HEK293 (cell line): ENCODE measurements at regions of chr1 and their contacts with region 1.

Region 1: DNA sequence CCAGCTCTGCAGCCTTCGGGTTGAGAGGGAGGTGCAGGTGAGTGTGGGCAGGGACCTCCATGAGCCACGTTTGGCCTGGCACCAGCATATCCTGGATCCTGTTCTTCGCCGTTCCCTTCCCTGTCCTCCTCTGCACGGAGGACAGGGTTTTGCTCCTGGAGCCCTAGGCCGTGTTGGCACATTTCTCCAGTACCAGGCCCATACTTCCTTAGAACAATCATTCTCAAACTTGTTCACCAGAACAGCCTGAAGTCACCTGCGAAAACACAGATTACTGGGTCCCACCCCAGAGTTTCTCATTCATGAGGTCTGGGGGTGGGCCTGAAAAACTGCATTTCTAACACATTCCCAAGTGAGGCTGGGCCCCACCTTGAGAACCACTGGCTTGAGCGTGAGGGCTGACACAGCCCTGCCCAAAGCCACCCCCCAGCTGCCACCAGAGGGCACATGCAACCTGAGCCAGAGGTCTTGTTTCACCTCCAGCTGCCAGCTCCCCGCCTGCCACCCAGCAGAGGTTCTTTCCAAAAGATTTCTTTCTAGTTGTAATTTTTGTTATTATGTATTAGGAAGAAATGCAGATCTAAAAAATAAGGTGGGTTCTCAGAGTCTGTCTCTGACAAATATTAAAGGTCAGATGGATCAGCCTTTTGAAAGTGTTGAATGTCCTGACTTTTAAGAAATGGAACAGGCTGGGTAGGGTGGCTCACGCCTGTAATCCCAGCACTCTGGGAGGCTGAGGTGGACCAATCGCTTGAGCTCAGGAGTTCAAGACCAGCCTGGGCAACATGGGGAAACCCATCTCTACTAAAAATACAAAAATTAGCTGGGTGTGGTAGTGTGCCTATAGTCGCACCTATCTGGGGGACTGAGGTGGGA is 39.6 kb upstream of the LDLRAP1 start:
- H3K4me3 ChIP-seq: no peak overlapping the region
- H3K27ac ChIP-seq: no peak overlapping the region
- H3K4me1 ChIP-seq: no peaks in the 10 kb centered on the region
- CTCF ChIP-seq: peak; percentile 67

Region 2: GRCh38 chr1:25487628-25488027 is 16.2 kb before region 1 on chr1:
- CTCF ChIA-PET with region 1: interaction called, 19 read pairs
- POLR2A ChIA-PET with region 1: no interaction called
- H3K4me3 ChIP-seq: no peak overlapping the region
- H3K27ac ChIP-seq: no peak overlapping the region
- H3K4me1 ChIP-seq: peaks cover 4% of the 10 kb centered on the region; the same call in 1 of the 2 replicates
- CTCF ChIP-seq: no peak

Region 3: GRCh38 chr1:25675729-25676476 is 172.1 kb after region 1 on chr1:
- CTCF ChIA-PET with region 1: no interaction called
- POLR2A ChIA-PET with region 1: no interaction called
- H3K4me3 ChIP-seq: no peak overlapping the region
- H3K27ac ChIP-seq: no peak overlapping the region
- H3K4me1 ChIP-seq: peaks cover 8% of the 10 kb centered on the region
- CTCF ChIP-seq: no peak